Activated naive CD4-positive, alpha-beta T cell treated with anti-CD3 and anti-CD28 coated beads, Interleukin-2, amount 10 ng/mL, durations not matched to agents 7 days and 5 days (primary cell): ENCODE measurements at regions of chr1 and their contacts with region 1.

Region 1: GRCh38 chr1:47192458-47193384 is 2.9 kb upstream of the PDZK1IP1 start:
- DNase-seq: peak; percentile 78
- H3K4me3 Mint-ChIP-seq: no peak overlapping the region
- H3K27ac Mint-ChIP-seq: no peak overlapping the region
- H3K4me1 Mint-ChIP-seq: no peaks in the 10 kb centered on the region
- H3K27me3 Mint-ChIP-seq: peaks cover 30% of the 10 kb centered on the region

Region 2: GRCh38 chr1:47137925-47138615 is 54.7 kb before region 1 on chr1:
- CTCF ChIA-PET with region 1: no interaction called
- DNase-seq: no peak
- H3K4me3 Mint-ChIP-seq: no peak overlapping the region
- H3K27ac Mint-ChIP-seq: no peak overlapping the region
- H3K4me1 Mint-ChIP-seq: no peaks in the 10 kb centered on the region
- H3K27me3 Mint-ChIP-seq: peaks cover 11% of the 10 kb centered on the region

Region 3: GRCh38 chr1:47262787-47263413 is 70.2 kb after region 1 on chr1:
- CTCF ChIA-PET with region 1: interaction called, 63 read pairs
- DNase-seq: peak; percentile 66
- H3K4me3 Mint-ChIP-seq: no peak overlapping the region
- H3K27ac Mint-ChIP-seq: no peak overlapping the region
- H3K4me1 Mint-ChIP-seq: no peaks in the 10 kb centered on the region
- H3K27me3 Mint-ChIP-seq: no peaks in the 10 kb centered on the region

Region 4: GRCh38 chr1:47361380-47361779 is 168.7 kb after region 1 on chr1:
- CTCF ChIA-PET with region 1: no interaction called
- DNase-seq: no peak
- H3K4me3 Mint-ChIP-seq: no peak overlapping the region
- H3K27ac Mint-ChIP-seq: no peak overlapping the region
- H3K4me1 Mint-ChIP-seq: peaks cover 6% of the 10 kb centered on the region
- H3K27me3 Mint-ChIP-seq: no peaks in the 10 kb centered on the region